Activated CD8-positive, alpha-beta T cell treated with anti-CD3 and anti-CD28 coated beads for 36 hours (primary cell): ENCODE measurements at regions of chr15 and their contacts with region 1.

Region 1: GRCh38 chr15:72375847-72376581 is at the start of gene HEXA:
- DNase-seq: peak; percentile 99
- ATAC-seq: peak; percentile 87
- H3K4me3 Mint-ChIP-seq: peak within 1 kb of the TSS; percentile 85
- H3K27ac Mint-ChIP-seq: peak within 1 kb of the TSS; percentile 94
- H3K4me1 Mint-ChIP-seq: peaks cover 29% of the 10 kb centered on the region
- H3K27me3 Mint-ChIP-seq: peaks cover 2% of the 10 kb centered on the region
- CTCF ChIP-seq: no peak
- total RNA-seq, gene HEXA: 55.8 to 66.8 TPM

Region 2: DNA sequence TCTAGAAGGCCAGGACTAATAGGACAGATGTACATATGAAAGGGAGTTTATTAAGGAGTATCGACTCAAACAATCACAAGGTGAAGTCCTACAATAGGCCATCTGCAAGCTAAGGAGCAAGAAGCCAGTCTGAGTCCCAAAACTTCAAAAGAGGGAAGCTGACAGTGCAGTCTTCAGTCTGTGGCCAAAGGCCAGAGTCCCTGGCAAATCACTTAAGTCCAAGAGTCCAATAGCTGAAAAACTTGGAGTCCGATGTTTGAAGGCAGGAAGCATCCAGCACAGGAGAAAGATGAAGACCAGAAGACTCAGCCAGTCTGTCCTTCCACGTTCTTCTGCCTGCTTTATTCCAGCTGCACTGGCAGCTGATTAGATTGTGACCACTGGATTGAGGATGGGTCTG is 45.0 kb before region 1 on chr15:
- CTCF ChIA-PET with region 1: no interaction called
- POLR2A ChIA-PET with region 1: no interaction called
- intact Hi-C with region 1: no loop called
- DNase-seq: no peak
- ATAC-seq: no peak
- H3K4me3 Mint-ChIP-seq: no peak overlapping the region
- H3K27ac Mint-ChIP-seq: no peak overlapping the region
- H3K4me1 Mint-ChIP-seq: no peaks in the 10 kb centered on the region
- H3K27me3 Mint-ChIP-seq: no peaks in the 10 kb centered on the region
- CTCF ChIP-seq: no peak

Region 3: GRCh38 chr15:72365844-72366243 is 10.2 kb before region 1 on chr15:
- CTCF ChIA-PET with region 1: no interaction called
- POLR2A ChIA-PET with region 1: interaction called, 17 read pairs
- intact Hi-C with region 1: no loop called
- DNase-seq: peak; percentile 49
- ATAC-seq: peak; percentile 88
- H3K4me3 Mint-ChIP-seq: no peak overlapping the region
- H3K27ac Mint-ChIP-seq: peak overlapping the region; percentile 39
- H3K4me1 Mint-ChIP-seq: peaks cover 24% of the 10 kb centered on the region
- H3K27me3 Mint-ChIP-seq: no peaks in the 10 kb centered on the region
- CTCF ChIP-seq: no peak

Region 4: GRCh38 chr15:72473614-72474465 is 97.8 kb after region 1 on chr15 and contains the start of gene ARIH1:
- CTCF ChIA-PET with region 1: interaction called, 3 read pairs
- POLR2A ChIA-PET with region 1: interaction called, 20 read pairs
- intact Hi-C with region 1: no loop called
- DNase-seq: peak; percentile 95
- ATAC-seq: peak; percentile 78
- H3K4me3 Mint-ChIP-seq: peak within 1 kb of the TSS; percentile 97
- H3K27ac Mint-ChIP-seq: peak within 1 kb of the TSS; percentile 87
- H3K4me1 Mint-ChIP-seq: peaks cover 31% of the 10 kb centered on the region
- H3K27me3 Mint-ChIP-seq: no peaks in the 10 kb centered on the region
- CTCF ChIP-seq: no peak
- total RNA-seq, gene ARIH1: 170 to 175 TPM